Aorta (tissue), 5 donors: ENCODE measurements at regions of chr12 and their contacts with region 1.

Region 1: GRCh38 chr12:53352331-53353256 is 16.4 kb upstream of the SP7 start:
- DNase-seq: peak; percentile 86 to 87
- ATAC-seq: peak; percentile 96
- H3K4me3 ChIP-seq: no peak overlapping the region
- H3K27ac ChIP-seq: no peak overlapping the region
- H3K4me1 ChIP-seq: no peaks in the 10 kb centered on the region
- H3K27me3 ChIP-seq: no peaks in the 10 kb centered on the region

Region 2: GRCh38 chr12:53300187-53300586 is 52.4 kb before region 1 on chr12:
- intact Hi-C with region 1: no loop called
- DNase-seq: no peak
- ATAC-seq: no peak
- H3K4me3 ChIP-seq: peak overlapping the region; percentile 29 to 50
- H3K27ac ChIP-seq: peak overlapping the region in 1 of 2 donors; percentile 31
- H3K4me1 ChIP-seq: no peaks in the 10 kb centered on the region
- H3K27me3 ChIP-seq: no peaks in the 10 kb centered on the region

Region 3: DNA sequence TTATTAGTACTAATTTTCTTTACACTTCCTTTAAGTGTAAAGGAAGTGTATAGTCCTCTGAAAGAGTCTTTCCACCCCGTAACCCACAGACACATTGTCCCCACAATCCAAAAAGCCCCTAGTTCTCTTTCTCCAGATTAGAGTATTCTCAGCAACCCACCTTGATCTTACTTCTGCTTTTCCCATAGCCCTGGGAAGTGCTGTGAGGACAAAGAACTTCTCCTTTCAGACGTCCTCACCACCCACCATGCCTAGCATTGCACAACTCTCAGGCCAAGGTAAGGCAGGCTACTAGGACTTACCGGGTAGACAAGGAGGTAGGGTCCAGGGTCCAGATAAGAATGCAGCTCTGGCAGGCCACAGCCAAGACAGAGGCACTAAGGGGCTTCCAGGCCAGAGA is 38.6 kb before region 1 on chr12:
- intact Hi-C with region 1: no loop called
- DNase-seq: no peak
- ATAC-seq: no peak
- H3K4me3 ChIP-seq: no peak overlapping the region
- H3K27ac ChIP-seq: no peak overlapping the region
- H3K4me1 ChIP-seq: no peaks in the 10 kb centered on the region
- H3K27me3 ChIP-seq: no peaks in the 10 kb centered on the region

Region 4: DNA sequence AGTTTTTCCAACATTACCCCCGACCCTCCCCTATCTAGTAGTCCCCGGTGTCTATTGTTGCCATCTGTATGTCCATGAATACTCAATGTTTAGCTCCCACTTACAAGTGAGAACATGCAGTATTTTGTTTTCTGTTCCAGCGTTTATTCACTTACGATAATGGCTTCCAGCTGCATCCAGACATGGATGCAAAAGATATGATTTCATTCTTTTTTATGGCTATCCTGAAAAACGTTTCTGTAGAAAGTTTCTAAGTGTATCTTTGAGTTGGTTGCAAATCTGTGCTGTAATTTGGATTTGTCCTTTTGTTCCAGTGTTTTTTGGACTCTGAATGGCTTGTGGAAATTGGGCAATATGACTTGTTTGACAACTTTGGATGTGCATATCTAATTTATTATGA is 39.1 kb after region 1 on chr12:
- intact Hi-C with region 1: no loop called
- DNase-seq: no peak
- ATAC-seq: no peak
- H3K4me3 ChIP-seq: no peak overlapping the region
- H3K27ac ChIP-seq: no peak overlapping the region
- H3K4me1 ChIP-seq: no peaks in the 10 kb centered on the region
- H3K27me3 ChIP-seq: no peaks in the 10 kb centered on the region

Region 5: GRCh38 chr12:53424626-53425514 is 72.3 kb after region 1 on chr12:
- intact Hi-C with region 1: loop called (anchors 1 kb)
- DNase-seq: peak in 1 of 2 donors; percentile 63
- ATAC-seq: peak; percentile 5
- H3K4me3 ChIP-seq: no peak overlapping the region
- H3K27ac ChIP-seq: no peak overlapping the region
- H3K4me1 ChIP-seq: no peaks in the 10 kb centered on the region
- H3K27me3 ChIP-seq: no peaks in the 10 kb centered on the region

Region 6: DNA sequence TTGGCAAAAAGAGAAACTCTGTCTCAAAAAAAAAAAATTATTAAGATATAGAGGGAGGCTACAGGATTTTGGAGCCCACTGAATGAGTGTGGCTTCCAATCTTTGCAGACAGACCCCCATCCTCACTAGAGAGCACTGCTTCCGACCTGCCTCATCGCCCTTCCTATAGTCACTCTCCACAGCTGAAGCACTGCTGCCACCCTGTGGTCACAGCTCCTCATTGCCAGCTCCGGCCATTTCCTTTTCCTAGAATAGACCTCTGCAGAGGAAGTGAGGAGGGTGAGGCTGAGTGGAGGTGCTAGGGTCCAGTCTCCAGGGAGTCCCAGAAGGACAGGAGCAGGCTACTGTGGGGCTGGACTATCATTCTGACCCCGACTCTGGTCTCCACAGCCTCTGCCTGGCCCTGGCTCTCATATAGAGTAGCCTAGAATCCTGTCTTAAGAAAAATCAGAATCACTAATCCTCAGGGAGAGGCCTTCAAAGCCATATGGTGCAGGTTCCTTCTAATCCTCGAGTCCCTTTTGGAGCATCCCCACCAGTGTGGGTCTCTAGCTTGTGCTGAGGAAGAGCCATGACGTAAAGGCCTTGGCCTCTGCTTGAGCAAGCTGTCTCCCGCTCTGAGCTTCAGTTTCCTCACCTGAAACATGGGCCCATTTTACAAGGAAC is 156.1 kb after region 1 on chr12:
- intact Hi-C with region 1: loop called (anchors 2 to 5 kb)
- DNase-seq: peak; percentile 88 to 94
- ATAC-seq: peak; percentile 89
- H3K4me3 ChIP-seq: no peak overlapping the region
- H3K27ac ChIP-seq: no peak overlapping the region
- H3K4me1 ChIP-seq: no peaks in the 10 kb centered on the region
- H3K27me3 ChIP-seq: no peaks in the 10 kb centered on the region

Region 7: GRCh38 chr12:53543539-53543938 is 190.9 kb after region 1 on chr12:
- intact Hi-C with region 1: no loop called
- DNase-seq: peak in 1 of 2 donors; percentile 63
- ATAC-seq: peak; percentile 90
- H3K4me3 ChIP-seq: no peak overlapping the region
- H3K27ac ChIP-seq: peak overlapping the region; percentile 16 to 88
- H3K4me1 ChIP-seq: no peaks in the 10 kb centered on the region
- H3K27me3 ChIP-seq: no peaks in the 10 kb centered on the region